MCF 10A (cell line): ENCODE measurements at regions of chr13 and their contacts with region 1.

Region 1: DNA sequence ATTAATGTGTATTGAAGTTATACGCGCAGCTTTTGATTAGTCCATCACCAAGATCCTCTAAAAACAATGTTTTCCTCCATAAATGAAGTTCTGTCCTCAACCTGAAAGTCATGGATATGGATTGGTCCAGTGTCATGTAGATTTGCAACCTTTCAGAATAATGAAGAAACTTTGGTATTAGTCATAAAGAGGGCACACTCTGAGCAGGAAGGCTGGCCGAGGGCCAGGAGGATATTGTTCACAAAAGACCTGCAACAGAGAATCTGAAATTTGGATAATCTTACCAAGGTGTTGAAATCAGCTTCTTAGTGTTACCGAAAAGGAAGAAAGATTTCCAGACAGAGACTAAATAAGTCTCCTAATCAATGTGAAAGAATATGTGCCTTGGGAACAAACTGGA is 20.7 kb downstream of the CLDN10 start:
- DNase-seq: peak; percentile 99
- H3K4me3 Mint-ChIP-seq: no peak overlapping the region
- H3K27ac Mint-ChIP-seq: peak overlapping the region; percentile 49
- H3K4me1 Mint-ChIP-seq: peaks cover 28% of the 10 kb centered on the region
- H3K27me3 Mint-ChIP-seq: no peaks in the 10 kb centered on the region
- CTCF ChIP-seq: no peak

Region 2: DNA sequence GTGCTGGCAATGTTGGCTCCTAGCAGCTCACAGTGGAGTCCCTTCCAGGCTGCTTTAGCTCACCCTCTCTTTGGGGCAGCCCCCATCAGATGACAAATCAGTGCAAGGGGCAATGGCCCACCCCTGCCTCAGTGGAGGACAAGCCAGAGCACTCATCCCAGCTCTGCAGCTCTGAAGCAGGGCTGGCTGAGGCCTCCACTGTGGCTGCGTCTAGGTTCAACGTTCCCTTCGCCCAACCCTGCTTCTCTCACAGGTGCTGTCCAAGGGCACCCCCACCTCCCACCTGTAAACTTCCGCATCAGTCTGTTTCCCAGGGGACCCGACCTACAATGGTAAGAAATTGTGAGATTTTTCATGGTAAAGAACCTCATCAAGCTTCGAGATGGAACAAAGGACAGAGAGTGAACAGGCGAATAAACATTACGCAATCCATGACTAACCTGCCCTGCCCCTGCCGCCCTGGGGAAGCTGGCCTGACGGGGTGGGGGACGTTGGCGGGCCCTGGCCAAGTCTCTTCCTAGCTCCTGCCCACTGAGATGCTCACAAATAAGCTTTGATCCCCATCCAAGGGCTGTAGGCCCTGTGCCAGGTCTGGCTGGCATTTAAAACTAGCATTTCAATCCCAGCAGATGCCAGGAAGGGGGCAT is 30.8 kb after region 1 on chr13:
- CTCF ChIA-PET with region 1: no interaction called
- POLR2A ChIA-PET with region 1: interaction called, 16 read pairs
- intact Hi-C with region 1: no loop called
- DNase-seq: peak; percentile 97
- H3K4me3 Mint-ChIP-seq: peak overlapping the region; percentile 26
- H3K27ac Mint-ChIP-seq: peak overlapping the region; percentile 85
- H3K4me1 Mint-ChIP-seq: peaks cover 56% of the 10 kb centered on the region
- H3K27me3 Mint-ChIP-seq: no peaks in the 10 kb centered on the region
- CTCF ChIP-seq: no peak